ENCODE measurements at regions of chr6 and their contacts with region 1.

Region 1: DNA sequence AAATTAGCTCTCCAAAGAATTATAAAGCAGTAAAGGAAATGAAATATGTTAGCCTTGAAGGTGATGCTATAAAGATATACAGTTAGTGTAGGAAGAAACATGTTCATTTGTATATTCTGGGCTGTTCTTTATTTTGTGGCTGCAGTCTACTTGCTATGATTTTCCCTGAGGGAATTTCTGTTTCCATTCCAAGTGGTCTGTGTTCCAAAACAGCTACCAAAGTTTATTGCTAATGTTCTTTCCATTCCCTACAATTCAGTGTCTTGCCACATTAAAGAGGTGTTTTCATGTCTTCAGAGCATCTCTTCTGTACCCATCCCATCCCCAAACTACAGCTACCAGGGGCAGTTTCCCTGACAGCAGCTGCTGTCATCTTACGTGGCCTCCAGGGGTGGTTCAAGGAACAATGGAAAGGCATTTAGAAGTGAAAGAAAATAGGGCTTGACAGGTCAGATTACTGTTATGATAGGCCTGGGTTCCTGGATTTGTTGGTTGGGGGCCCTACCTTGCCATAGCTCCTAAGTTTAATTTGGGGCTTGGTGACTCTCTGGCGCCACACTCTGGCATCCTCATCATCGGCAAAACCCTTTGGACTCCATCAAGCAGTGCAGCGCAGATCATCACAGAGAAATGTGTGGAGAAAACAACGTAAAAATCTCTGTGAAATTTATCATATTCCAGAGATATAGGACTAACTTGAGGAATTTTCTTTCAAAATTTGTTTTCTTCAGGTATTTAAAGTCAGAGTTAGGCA is 33.8 kb upstream of the AIG1 start:
- DNase-seq: no peak
- CTCF ChIP-seq: peak; percentile 33

Region 2: DNA sequence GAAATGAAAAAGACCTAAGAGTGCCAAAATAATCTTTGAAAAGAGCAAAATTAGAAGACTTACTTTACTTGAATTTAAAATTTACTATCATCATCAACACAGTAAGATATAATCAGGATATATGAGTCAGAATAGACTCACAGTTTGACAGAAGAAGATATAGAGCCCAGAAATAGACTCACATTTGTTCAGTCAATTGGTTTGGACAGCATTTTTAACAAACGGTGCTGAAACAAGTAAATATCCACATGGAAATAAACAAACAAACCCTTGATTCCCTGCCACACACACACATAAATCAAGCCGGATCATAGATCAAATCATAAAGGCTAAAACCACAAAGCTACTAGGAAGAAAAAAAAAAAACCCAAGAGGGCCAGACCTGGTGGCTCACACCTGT is 434.0 kb before region 1 on chr6:
- CTCF ChIA-PET with region 1: no interaction called
- POLR2A ChIA-PET with region 1: no interaction called
- DNase-seq: no peak
- CTCF ChIP-seq: no peak

Region 3: DNA sequence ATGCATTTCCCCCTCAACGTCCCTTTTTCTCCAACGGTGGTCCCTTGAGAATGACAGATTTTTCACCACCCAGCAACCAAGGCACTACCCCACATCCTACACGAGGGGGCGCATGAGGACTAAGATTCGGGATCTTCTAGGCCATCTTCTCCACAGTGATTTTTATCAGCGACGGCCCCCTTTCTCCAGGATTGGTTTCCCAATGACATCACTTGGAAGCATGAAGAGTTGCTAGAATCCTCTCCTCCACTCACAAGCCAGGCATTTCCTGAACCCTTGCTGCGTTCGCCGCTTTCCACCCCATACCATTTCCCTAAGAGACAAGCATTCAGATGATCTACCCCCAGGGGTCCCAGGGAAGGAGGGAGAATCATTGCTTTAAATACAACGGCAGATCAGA is 333.9 kb before region 1 on chr6:
- CTCF ChIA-PET with region 1: interaction called, 22 read pairs
- POLR2A ChIA-PET with region 1: no interaction called
- DNase-seq: peak; percentile 41
- CTCF ChIP-seq: peak; percentile 86

Region 4: DNA sequence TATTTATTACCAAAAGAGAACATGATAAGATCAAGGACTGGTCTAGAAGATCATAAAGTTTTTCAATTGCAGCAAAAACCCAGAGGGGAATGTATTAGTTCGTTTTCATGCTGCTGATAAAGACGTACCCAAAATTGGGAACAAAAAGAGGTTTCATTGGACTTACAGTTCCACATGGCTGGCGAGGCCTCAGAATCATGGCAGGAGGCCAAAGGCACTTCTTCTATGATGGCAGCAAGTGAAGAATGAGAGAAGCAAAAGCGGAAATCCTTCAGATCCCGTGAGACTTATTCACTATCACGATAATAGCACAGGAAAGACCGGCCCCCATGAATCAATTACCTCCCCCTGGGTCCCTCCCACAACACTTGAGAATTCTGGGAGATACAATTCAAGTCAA is 24.2 kb before region 1 on chr6:
- CTCF ChIA-PET with region 1: no interaction called
- POLR2A ChIA-PET with region 1: no interaction called
- DNase-seq: no peak
- CTCF ChIP-seq: no peak

Measured in GM10248 (cell line).